Mammary epithelial cell (primary cell): ENCODE measurements at regions of chr19 and their contacts with region 1.

Region 1: GRCh38 chr19:10339380-10339960 is at the start of gene ICAM3:
- DNase-seq: no peak
- H3K4me3 ChIP-seq: no peak within 1 kb of the TSS
- H3K27ac ChIP-seq: no peak within 1 kb of the TSS
- H3K4me1 ChIP-seq: peaks cover 7% of the 10 kb centered on the region
- H3K27me3 ChIP-seq: no peaks in the 10 kb centered on the region
- CTCF ChIP-seq: no peak
- total RNA-seq, gene ICAM3: 4.3 to 10.2 TPM

Region 2: DNA sequence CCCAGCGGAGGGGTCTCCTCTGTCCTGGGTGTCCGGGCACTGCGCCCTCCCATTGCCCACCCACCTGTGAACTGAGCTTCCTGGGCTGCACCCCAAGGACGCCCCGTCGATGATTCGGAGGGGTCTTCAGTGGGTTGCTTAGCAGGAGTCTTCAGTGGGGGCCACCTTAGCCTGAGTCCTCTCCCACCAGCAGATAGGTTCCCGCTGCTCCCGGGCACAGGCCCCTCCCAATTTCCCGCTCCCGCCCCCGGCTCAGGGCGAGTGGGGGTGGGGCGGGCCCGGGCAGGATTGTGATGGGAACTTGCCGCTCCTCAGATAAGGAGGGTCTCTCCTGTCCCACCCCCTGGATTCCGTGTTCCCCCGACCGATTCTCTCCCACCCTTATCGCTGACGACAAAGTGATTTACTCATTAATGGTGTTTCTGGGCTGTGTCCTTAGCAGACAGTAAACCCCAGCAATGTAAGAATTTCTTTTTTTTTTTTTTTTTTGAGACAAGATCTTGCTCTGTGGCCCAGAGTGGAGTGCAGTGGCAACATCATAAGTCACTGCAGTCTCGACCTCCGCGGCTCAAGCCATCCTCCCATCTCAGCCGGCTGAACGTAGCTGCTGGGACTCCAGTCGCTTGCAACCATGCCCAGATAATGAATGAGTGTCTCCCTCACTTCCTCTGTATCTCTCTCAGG is 178.4 kb after region 1 on chr19:
- CTCF ChIA-PET with region 1: interaction called, 18 read pairs
- dilution Hi-C with region 1: no loop called
- in situ Hi-C with region 1: no loop called
- intact Hi-C with region 1: no loop called
- DNase-seq: no peak
- H3K4me3 ChIP-seq: peak overlapping the region; percentile 65 to 69 (median 66)
- H3K27ac ChIP-seq: no peak overlapping the region
- H3K4me1 ChIP-seq: peaks cover 24% of the 10 kb centered on the region
- H3K27me3 ChIP-seq: no peaks in the 10 kb centered on the region
- CTCF ChIP-seq: no peak